ENCODE measurements at regions of chr21 and their contacts with region 1.

Region 1: GRCh38 chr21:41634873-41635272 is 126.9 kb upstream of the TMPRSS2 start:
- DNase-seq: no peak
- ATAC-seq: no peak
- H3K4me3 ChIP-seq: no peak overlapping the region
- H3K27ac ChIP-seq: no peak overlapping the region
- H3K4me1 ChIP-seq: no peaks in the 10 kb centered on the region
- H3K27me3 ChIP-seq: no peaks in the 10 kb centered on the region

Region 2: GRCh38 chr21:41520575-41521442 is 114.1 kb before region 1 on chr21:
- intact Hi-C with region 1: no loop called
- DNase-seq: no peak
- ATAC-seq: no peak
- H3K4me3 ChIP-seq: no peak overlapping the region
- H3K27ac ChIP-seq: no peak overlapping the region
- H3K4me1 ChIP-seq: no peaks in the 10 kb centered on the region
- H3K27me3 ChIP-seq: no peaks in the 10 kb centered on the region

Region 3: GRCh38 chr21:41663801-41664788 is 29.2 kb after region 1 on chr21:
- intact Hi-C with region 1: no loop called
- DNase-seq: no peak
- ATAC-seq: no peak
- H3K4me3 ChIP-seq: no peak overlapping the region
- H3K27ac ChIP-seq: no peak overlapping the region
- H3K4me1 ChIP-seq: peaks cover 0 to 2% of the 10 kb centered on the region in 2 donors
- H3K27me3 ChIP-seq: no peaks in the 10 kb centered on the region

Region 4: GRCh38 chr21:41699311-41700091 is 64.6 kb after region 1 on chr21:
- intact Hi-C with region 1: loop called in 1 of 2 experiments (anchors 2 kb)
- DNase-seq: peak in 1 of 2 donors; percentile 50
- ATAC-seq: no peak
- H3K4me3 ChIP-seq: no peak overlapping the region
- H3K27ac ChIP-seq: no peak overlapping the region
- H3K4me1 ChIP-seq: no peaks in the 10 kb centered on the region
- H3K27me3 ChIP-seq: no peaks in the 10 kb centered on the region

Measured in aorta (tissue), 5 donors.